Uterus (tissue), 4 donors: ENCODE measurements at regions of chr15 and their contacts with region 1.

Region 1: DNA sequence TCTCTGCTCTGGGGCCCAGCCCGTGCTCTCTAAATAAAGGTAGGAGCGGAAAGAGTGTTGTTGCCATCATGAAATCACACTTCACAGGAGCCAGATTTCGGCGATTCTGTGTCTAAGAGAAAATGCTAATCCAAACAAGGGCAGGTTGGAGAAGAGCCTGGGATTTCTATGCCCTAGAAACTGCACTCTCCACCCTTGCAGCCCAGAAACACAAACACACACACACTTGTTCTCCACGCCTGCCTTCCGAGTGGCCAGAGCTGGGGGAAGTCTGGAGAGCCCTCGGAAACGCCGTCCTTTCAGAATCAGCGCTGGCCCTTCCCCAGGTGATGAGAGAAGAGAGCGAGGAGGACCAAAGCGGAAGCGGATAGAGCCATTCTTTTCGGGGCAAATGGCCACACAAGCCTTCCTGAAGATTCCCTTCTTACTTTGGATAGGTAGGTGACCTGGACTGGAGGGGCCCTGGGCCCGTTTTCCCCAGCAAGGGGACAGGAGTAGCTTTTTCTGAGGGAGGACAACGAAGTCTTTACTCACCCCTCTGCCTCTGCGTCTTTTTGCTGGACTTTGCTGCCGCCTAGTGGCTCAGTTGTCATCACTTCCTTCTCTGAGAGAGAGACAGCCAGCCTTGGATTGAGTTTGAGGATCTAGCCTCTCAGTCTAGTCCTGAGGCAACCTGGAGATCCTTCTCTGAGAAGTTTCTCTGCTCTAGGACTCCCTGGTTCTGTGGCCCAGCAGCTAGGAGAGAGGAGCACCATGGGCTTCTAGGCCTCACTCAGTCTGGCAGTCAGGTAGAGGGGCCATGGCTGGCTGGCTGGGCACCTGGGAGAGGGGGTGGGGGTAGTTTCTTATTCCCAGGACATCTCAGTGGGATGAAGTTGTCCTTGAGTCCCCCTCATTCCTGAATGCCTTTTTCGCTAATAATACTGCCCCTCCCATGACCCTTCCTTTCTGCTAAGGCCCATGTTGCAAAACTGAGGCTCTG is 37.7 kb downstream of the SENP8 start:
- DNase-seq: peak; percentile 86
- H3K4me3 ChIP-seq: peak overlapping the region; percentile 43 to 48
- H3K27ac ChIP-seq: peak overlapping the region; percentile 63 to 83
- H3K4me1 ChIP-seq: no peaks in the 10 kb centered on the region
- H3K27me3 ChIP-seq: no peaks in the 10 kb centered on the region
- CTCF ChIP-seq: peak; percentile 78 to 94 (median 87)
- POLR2A ChIP-seq: no peak

Region 2: DNA sequence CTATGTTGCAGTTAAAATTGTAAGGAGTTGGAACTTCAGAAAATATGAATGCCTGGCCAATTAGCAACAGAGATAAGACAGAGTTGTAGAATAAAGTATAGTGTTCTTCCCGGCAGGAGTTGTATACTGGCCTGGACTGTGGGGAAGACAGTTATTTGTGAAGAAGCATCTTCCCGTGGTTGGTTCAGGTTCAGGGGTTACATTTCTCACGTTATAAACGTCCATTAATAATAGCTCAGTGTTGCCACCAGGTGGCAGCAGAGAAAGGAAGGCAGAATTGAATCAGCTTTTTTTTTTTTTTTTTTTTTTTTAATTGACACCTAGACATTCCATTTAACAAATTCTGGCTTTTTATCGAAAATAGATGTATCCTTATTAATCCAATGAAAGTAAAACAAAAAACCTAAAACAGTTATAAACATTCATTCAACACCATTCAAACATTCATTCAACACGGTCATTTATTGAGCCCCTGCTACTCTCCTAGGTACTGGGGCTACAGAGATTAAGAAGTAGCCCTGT is 412.0 kb before region 1 on chr15:
- intact Hi-C with region 1: loop called (anchors 10 kb)
- DNase-seq: peak; percentile 48 to 75
- H3K4me3 ChIP-seq: no peak overlapping the region
- H3K27ac ChIP-seq: peak overlapping the region; percentile 23 to 28
- H3K4me1 ChIP-seq: no peaks in the 10 kb centered on the region
- H3K27me3 ChIP-seq: no peaks in the 10 kb centered on the region
- CTCF ChIP-seq: peak; percentile 58 to 65 (median 63)
- POLR2A ChIP-seq: no peak

Region 3: GRCh38 chr15:72265031-72265430 is 109.1 kb after region 1 on chr15:
- intact Hi-C with region 1: no loop called
- DNase-seq: no peak
- H3K4me3 ChIP-seq: no peak overlapping the region
- H3K27ac ChIP-seq: no peak overlapping the region
- H3K4me1 ChIP-seq: no peaks in the 10 kb centered on the region
- H3K27me3 ChIP-seq: no peaks in the 10 kb centered on the region
- CTCF ChIP-seq: no peak
- POLR2A ChIP-seq: no peak